Naive thymus-derived CD4-positive, alpha-beta T cell (primary cell): ENCODE measurements at regions of chr15 and their contacts with region 1.

Region 1: DNA sequence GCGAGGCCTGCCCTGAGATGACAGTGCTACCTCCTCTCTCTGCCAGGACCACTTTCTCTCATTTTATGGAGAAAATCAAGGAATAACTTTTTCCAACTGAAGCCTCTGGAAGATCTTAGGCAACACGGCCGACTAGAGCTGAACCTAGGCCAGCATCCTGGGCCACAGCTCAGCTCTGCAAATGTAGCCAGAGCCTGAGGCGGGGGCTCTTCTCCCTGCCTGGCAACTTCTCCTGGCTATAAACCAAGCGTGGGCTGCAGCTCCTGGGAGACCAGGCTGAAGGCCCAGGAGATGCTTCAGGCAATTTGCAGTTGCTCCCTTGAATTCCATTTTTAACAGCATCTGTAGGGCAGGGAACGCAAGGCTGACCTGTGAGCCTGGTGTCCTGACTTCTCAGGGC is 74.9 kb downstream of the CEMIP start:
- DNase-seq: no peak
- ATAC-seq: no peak
- H3K4me3 ChIP-seq: no peak overlapping the region
- H3K4me3 Mint-ChIP-seq: no peak overlapping the region
- H3K27ac ChIP-seq: no peak overlapping the region
- H3K27ac Mint-ChIP-seq: no peak overlapping the region
- H3K4me1 ChIP-seq: no peaks in the 10 kb centered on the region
- H3K4me1 Mint-ChIP-seq: peaks cover 5 to 28% (median 23%) of the 10 kb centered on the region in 7 donors
- H3K27me3 ChIP-seq: no peaks in the 10 kb centered on the region
- H3K27me3 Mint-ChIP-seq: peaks cover 6 to 20% (median 8%) of the 10 kb centered on the region in 5 donors

Region 2: GRCh38 chr15:80804965-80805495 is 49.1 kb before region 1 on chr15:
- CTCF ChIA-PET with region 1: interaction called, 3 read pairs
- POLR2A ChIA-PET with region 1: no interaction called
- intact Hi-C with region 1: loop called in 1 of 2 experiments (anchors 1 kb)
- DNase-seq: peak in 2 of 9 donors; percentile 1 to 36
- ATAC-seq: no peak
- H3K4me3 ChIP-seq: no peak overlapping the region
- H3K4me3 Mint-ChIP-seq: peak overlapping the region; percentile 25 to 63 (median 52)
- H3K27ac ChIP-seq: peak overlapping the region; percentile 36
- H3K27ac Mint-ChIP-seq: peak overlapping the region; percentile 6 to 86 (median 74)
- H3K4me1 ChIP-seq: peaks cover 6 to 13% of the 10 kb centered on the region in 2 donors
- H3K4me1 Mint-ChIP-seq: peaks cover 13 to 38% (median 26%) of the 10 kb centered on the region in 7 donors
- H3K27me3 ChIP-seq: no peaks in the 10 kb centered on the region
- H3K27me3 Mint-ChIP-seq: peaks cover 0 to 4% (median 0%) of the 10 kb centered on the region in 5 donors